Aorta (tissue), 5 donors: ENCODE measurements at regions of chr3 and their contacts with region 1.

Region 1: GRCh38 chr3:126752303-126752842 is 48.3 kb downstream of the CHCHD6 start:
- DNase-seq: peak; percentile 85 to 92
- ATAC-seq: peak; percentile 84
- H3K4me3 ChIP-seq: no peak overlapping the region
- H3K27ac ChIP-seq: no peak overlapping the region
- H3K4me1 ChIP-seq: no peaks in the 10 kb centered on the region
- H3K27me3 ChIP-seq: no peaks in the 10 kb centered on the region

Region 2: GRCh38 chr3:127074728-127075360 is 322.5 kb after region 1 on chr3:
- intact Hi-C with region 1: no loop called
- DNase-seq: peak; percentile 82 to 86
- ATAC-seq: peak; percentile 71
- H3K4me3 ChIP-seq: no peak overlapping the region
- H3K27ac ChIP-seq: peak overlapping the region in 1 of 2 donors; percentile 25
- H3K4me1 ChIP-seq: no peaks in the 10 kb centered on the region
- H3K27me3 ChIP-seq: no peaks in the 10 kb centered on the region

Region 3: GRCh38 chr3:127172781-127173515 is 420.6 kb after region 1 on chr3:
- intact Hi-C with region 1: loop called (anchors 5 to 10 kb)
- DNase-seq: peak in 1 of 2 donors; percentile 84
- ATAC-seq: peak; percentile 54
- H3K4me3 ChIP-seq: no peak overlapping the region
- H3K27ac ChIP-seq: no peak overlapping the region
- H3K4me1 ChIP-seq: peaks cover 0 to 3% of the 10 kb centered on the region in 2 donors
- H3K27me3 ChIP-seq: no peaks in the 10 kb centered on the region

Region 4: DNA sequence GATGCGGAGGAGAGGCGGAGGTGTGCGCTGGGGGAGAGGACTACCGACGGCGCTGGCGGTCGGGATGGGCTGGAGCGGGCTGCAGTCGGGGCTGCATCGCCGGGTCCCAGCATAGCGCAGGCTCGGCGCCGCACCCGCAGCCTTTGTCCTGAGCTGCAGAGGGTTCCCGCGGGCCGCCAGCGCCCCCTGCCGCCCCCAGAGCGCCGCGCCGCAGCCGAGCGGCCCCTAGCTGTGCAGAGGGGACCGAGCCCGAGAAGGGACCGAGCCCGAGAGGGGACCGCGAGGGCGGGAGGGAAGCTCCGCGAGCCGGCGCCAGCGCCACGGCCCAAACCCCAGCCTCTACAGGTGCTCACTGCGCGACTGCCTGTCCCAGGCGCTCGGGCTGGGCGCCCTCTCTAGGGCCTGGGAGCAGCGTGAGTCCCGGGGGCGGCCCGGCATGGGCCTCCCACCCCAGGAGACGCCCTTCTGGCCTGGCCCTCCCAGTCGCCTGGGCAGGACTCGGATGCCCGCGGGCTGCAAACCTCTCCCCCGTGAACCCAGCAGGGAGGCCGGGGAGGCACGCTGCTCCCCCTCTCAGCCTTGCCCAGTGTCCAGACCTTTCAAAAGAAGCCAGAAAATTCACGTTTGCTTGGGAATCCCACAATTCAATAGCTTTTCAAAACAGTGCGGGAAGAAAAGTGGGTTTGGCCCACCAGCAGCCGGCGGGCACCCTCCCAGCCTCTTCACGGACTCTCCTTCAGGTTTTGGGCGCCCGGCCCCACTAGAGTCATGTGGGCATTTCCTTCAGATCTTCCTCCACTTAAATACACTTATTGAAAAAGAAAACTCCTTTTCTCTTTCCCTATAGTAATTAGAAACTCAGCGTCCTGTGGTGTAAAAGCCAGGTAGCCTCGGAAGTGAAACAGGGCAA is 703.4 kb after region 1 on chr3:
- intact Hi-C with region 1: loop called (anchors 1 to 10 kb)
- DNase-seq: peak; percentile 73 to 92
- ATAC-seq: peak; percentile 89
- H3K4me3 ChIP-seq: no peak overlapping the region
- H3K27ac ChIP-seq: no peak overlapping the region
- H3K4me1 ChIP-seq: no peaks in the 10 kb centered on the region
- H3K27me3 ChIP-seq: no peaks in the 10 kb centered on the region